ENCODE measurements at regions of chr10 and their contacts with region 1.

Region 1: DNA sequence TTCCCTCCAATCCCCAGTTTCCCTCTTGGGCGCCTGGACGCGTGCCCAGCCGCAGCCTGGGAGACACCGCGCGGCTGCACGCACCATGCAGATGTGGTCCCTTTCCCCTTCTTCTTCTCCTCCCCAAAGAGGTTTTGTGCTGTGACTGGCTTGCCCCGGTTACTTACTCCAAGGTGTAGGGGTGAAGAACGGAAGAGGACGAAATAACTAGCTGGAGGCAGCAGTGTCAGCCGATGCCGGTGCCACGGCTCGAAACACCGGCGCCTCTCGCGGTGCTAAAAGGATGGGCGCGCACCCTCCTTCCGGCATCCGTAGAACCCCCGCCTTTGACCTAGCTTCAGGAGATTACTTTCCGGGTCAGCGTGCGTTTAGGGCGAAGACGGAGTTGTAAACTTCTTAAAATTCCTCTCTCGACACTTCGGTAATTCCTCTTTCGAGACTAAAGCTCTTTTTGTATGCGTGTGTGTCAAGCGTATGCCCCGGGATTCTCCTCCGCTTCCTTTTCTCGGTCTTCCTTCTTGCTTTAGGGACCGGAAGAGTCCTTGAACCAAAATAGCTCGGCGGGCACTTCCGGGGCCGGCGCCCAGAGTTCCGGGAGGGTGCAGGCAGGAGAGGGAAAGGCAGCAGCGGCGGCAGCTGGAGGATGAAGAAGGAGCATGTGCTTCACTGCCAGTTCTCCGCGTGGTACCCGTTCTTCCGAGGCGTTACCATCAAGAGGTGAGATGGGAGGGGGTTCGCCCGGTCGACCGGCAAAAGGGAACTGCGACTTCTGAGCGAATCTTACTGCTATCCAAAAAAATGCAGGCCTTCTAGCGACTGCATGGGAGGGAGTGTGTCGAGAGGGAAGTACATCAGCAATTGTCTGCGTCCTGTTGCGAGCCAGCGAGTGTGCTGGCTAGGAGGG is at the starts of genes CDC123 and NUDT5:
- DNase-seq: peak; percentile 84 to 95 (median 90)

Region 2: DNA sequence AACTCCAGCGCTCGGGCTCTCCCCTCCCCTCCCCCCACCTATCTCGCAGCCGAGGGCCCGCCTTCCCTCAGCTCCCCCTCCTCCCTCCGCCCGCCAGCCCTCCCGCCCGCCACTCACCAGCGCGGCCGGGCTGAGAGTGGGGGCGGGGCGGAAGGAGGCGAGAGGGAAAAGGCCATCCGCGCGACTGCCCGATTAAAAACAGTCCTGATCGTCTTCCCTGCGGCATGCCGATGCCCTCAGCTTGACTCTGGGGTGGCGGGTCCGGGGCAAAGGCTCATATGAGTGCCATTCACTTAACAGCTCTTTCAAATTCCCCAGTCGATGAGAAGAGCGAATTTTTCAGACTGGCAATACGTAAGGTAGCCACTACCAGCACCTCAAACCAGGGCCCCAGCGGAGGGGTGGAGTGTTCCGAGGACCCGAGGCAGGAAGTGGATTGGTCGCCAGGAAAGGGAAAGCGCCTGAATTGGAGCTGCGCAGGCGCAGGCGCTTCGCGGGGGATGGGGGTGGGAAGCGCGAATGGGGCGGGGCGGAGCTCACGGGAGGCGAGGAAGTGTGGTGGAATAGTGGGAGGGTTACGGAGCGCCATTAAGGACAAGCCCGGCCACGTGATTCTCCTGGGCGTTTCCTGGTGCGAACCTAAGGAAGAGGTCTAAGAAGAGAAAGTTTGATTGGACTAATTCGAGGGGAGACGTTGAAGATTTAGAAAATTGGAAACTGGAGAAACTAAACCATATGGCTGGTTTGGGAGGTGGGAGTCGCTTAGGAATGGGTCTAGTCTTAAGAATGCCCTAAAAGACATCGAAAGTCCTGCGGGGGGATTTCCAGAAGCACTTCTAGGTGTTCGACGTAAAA is 152.8 kb before region 1 on chr10 and contains the start of gene UPF2:
- intact Hi-C with region 1: loop called (anchors 10 kb)
- DNase-seq: peak; percentile 95 to 99 (median 98)

Region 3: DNA sequence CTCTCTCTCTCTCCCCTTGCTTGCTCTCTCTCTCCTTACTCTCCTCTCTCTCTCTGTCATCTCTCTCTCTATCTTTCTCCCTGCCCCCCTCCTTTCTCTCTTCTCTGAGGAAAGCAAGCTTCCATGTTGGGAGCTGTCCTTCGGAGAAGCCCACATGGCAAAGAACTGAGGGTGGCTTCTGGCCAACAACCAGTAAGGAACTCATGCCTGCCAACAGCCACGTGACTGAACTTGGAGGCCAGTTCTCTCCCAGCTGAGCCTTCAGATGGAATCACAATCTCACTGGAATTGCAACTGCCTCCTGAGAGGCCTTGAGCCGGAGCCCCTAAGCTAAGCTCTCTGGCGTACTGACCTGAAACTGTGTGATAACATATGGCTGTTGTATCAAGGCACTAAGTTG is 139.1 kb before region 1 on chr10:
- intact Hi-C with region 1: no loop called
- DNase-seq: no peak

Region 4: DNA sequence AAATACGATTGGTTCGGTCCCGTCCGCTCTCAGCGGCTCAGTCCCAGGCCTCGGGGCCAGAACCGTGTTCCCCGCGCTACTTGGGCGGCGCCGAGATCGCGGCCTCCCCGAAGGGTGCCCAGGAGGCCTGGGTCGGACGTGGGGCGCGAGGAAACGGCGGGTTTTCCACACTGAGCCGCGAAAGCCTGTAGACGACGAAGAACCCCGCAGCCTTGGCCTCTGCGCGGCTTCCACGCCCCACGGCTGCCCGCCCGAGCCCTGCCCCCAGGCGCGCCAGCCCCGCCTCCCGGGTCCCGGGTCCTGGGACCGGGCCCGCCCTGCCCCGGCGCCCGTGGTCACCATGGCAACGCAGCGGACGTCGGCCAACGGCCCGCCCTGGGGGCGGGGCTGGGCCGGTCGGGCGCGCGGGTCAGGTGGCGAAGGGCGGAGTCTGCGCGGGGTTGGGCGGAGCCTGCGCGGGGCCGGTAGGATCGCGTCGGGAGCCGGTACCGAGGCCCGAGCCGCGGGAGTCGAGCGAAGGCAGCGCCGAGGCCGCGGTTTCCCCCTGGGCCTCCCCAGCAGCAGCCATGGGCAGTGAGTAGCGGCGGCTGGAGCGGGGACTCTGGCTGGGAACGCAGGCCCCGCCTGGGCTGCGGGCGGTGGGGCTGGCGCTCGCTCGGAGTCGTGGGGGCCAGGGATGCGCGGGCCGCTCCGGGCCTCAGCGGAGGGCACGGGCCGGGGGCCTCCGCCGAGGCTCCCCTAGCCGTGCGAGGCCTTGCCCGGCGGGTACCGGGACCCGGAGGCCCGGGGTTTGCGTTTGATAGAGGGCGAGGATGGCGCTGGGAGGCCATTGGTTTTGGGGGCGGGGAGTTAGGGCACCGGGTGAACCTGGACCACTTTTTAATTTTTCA is 66.4 kb before region 1 on chr10 and contains the start of gene SEC61A2:
- intact Hi-C with region 1: loop called (anchors 10 kb)
- DNase-seq: peak; percentile 83 to 100 (median 97)

Region 5: DNA sequence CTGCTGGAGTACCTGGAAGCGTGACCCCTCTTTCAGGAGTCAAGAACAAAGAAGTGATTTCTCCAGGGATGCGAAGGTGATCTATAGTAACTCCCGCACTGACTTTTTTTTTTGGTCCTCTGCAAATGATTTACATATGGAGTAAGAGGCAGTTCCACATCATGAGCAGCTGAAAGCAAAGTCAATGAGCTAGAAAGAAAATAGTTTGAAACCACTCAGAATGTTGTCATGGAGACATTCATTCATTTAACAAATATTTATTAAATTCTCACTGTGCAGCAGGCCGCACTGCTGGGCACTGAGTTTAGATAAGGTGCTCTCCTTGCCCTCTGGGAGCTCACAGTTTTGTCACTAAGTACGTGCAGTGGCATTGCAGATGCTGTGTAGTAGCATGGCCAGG is 360.2 kb after region 1 on chr10:
- intact Hi-C with region 1: no loop called
- DNase-seq: no peak